ENCODE measurements at regions of chr14 and their contacts with region 1.

Region 1: DNA sequence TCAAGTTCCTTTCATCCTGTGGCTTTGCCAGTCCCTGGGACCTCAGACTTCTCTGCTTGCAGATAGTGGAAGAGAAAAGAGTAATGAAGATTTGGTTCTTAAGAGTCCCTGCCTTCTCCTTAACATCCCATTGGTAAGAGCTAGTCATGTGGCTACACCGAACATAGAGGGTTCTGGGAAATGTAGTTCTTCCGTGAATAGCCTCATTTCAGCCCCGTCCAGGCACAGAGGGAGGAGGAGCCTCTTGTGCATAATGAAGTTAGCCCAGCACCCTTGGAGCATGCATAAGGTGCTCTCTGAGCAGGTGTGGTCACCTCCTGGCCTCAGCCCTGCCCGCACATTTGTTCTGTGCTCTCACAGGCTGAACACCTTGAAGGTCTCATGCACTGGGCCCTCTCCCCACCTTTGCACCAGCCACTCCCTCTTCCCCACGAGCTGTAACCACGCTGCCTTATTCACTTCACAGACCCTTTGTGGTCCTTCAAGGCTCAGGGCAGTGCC is 134.0 kb downstream of the BCL11B start:
- DNase-seq: no peak
- ATAC-seq: peak; percentile 81
- H3K4me3 Mint-ChIP-seq: peak overlapping the region; percentile 31; the same call in 1 of the 2 replicates
- H3K27ac Mint-ChIP-seq: no peak overlapping the region
- H3K4me1 Mint-ChIP-seq: peaks cover 32% of the 10 kb centered on the region
- H3K27me3 Mint-ChIP-seq: no peaks in the 10 kb centered on the region; the same call in 1 of the 2 replicates
- CTCF ChIP-seq: no peak

Region 2: GRCh38 chr14:99077076-99077843 is 60.8 kb before region 1 on chr14:
- CTCF ChIA-PET with region 1: no interaction called
- POLR2A ChIA-PET with region 1: no interaction called
- DNase-seq: no peak
- ATAC-seq: no peak
- H3K4me3 Mint-ChIP-seq: no peak overlapping the region
- H3K27ac Mint-ChIP-seq: no peak overlapping the region
- H3K4me1 Mint-ChIP-seq: no peaks in the 10 kb centered on the region
- H3K27me3 Mint-ChIP-seq: no peaks in the 10 kb centered on the region; the same call in 1 of the 2 replicates
- CTCF ChIP-seq: no peak

Region 3: GRCh38 chr14:99122521-99123125 is 15.4 kb before region 1 on chr14:
- CTCF ChIA-PET with region 1: interaction called, 10 read pairs
- POLR2A ChIA-PET with region 1: no interaction called
- DNase-seq: no peak
- ATAC-seq: peak; percentile 17
- H3K4me3 Mint-ChIP-seq: no peak overlapping the region
- H3K27ac Mint-ChIP-seq: peak overlapping the region; percentile 53; the same call in 1 of the 2 replicates
- H3K4me1 Mint-ChIP-seq: peaks cover 22% of the 10 kb centered on the region
- H3K27me3 Mint-ChIP-seq: peaks cover 8% of the 10 kb centered on the region
- CTCF ChIP-seq: no peak

Measured in WTC11 (cell line).